ENCODE measurements at regions of chr17 and their contacts with region 1.

Region 1: DNA sequence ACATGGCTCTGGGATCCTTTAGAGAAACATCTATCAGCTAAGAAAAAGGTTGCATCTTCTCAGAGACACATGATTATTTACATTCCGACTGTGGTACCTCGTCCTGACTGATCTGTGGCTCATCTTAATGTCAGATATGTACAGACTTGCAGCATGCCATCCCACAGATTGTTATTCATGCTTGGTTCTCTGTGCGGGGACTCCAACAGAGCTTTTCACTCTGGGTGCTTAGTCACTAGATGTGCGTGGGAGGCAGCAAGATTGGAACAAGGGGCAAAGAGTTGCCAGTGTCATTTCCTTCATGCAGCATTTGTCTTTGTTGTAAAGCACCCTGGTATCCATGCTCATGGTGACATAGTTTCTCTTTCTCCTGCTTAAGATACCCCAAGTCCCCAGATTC is 179.1 kb upstream of the CACNG5 start:
- DNase-seq: peak; percentile 86
- ATAC-seq: peak; percentile 91
- H3K4me3 Mint-ChIP-seq: no peak overlapping the region
- H3K27ac Mint-ChIP-seq: peak overlapping the region; percentile 73
- H3K4me1 Mint-ChIP-seq: peaks cover 47% of the 10 kb centered on the region
- H3K27me3 Mint-ChIP-seq: no peaks in the 10 kb centered on the region

Region 2: DNA sequence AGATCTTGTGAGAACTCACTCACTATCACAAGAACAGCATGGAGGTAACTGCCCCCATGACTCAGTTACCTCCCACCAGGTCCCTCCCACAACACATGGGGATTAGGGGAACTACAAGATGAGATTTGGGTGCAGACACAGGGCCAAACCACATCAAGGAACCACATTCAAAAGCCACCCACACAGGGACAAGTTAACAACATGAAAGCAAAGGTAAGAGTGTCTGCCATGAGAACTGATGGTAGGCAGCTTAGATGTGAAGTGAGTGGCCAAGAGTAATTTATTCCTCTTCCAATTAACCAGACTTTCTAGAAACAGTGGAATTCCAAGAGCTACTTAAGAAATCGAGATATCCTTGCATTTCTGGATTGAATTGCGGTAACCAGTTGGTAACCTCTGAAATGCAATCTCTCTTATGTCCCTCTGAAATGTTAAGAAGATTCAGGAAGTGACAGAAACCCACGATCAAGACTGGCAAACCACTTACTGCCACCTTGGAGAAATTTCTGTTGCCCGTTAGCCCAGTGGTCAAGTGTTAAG is 11.7 kb after region 1 on chr17:
- CTCF ChIA-PET with region 1: interaction called, 3 read pairs
- POLR2A ChIA-PET with region 1: interaction called, 4 read pairs
- intact Hi-C with region 1: loop called (anchors 1 kb)
- DNase-seq: peak; percentile 84
- ATAC-seq: peak; percentile 81
- H3K4me3 Mint-ChIP-seq: peak overlapping the region; percentile 1
- H3K27ac Mint-ChIP-seq: peak overlapping the region; percentile 76
- H3K4me1 Mint-ChIP-seq: peaks cover 81% of the 10 kb centered on the region
- H3K27me3 Mint-ChIP-seq: no peaks in the 10 kb centered on the region

Region 3: DNA sequence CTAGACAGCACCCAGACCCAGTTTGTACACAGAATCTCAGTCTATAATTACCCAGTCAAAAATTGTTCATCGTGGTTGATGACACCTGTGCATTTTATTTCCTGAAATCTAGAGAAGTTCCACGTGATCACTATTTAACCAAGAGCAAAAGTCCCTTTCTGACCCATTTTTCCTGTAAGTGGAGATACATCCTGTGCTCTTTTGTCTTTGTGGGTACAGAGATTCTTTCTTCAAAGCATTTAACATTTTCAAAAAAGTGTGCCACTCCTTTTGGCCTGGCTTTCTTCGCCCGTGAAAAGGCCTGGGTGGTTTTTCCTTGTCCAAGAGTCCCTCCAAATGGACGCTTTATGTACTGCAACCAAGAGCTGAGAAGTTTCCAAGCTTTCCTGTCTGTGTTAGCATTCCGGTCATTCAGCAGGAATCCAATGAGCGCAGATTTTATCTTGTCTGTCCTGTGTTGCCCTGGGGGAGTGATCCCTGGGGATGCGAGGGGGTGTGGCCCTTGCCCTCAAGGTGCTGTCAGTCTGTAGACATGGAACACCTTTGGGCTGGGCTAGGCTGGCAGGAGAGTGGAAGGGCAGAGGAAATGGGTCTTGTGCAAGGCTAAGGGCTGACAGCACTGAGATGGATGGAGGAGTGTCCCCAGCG is 17.9 kb after region 1 on chr17:
- CTCF ChIA-PET with region 1: interaction called, 3 read pairs
- POLR2A ChIA-PET with region 1: no interaction called
- intact Hi-C with region 1: loop called (anchors 1 to 2 kb)
- DNase-seq: peak; percentile 63
- ATAC-seq: peak; percentile 80
- H3K4me3 Mint-ChIP-seq: peak overlapping the region; percentile 6
- H3K27ac Mint-ChIP-seq: peak overlapping the region; percentile 84
- H3K4me1 Mint-ChIP-seq: peaks cover 61% of the 10 kb centered on the region
- H3K27me3 Mint-ChIP-seq: no peaks in the 10 kb centered on the region